HEK293 (cell line): ENCODE measurements at regions of chr17 and their contacts with region 1.

Region 1: DNA sequence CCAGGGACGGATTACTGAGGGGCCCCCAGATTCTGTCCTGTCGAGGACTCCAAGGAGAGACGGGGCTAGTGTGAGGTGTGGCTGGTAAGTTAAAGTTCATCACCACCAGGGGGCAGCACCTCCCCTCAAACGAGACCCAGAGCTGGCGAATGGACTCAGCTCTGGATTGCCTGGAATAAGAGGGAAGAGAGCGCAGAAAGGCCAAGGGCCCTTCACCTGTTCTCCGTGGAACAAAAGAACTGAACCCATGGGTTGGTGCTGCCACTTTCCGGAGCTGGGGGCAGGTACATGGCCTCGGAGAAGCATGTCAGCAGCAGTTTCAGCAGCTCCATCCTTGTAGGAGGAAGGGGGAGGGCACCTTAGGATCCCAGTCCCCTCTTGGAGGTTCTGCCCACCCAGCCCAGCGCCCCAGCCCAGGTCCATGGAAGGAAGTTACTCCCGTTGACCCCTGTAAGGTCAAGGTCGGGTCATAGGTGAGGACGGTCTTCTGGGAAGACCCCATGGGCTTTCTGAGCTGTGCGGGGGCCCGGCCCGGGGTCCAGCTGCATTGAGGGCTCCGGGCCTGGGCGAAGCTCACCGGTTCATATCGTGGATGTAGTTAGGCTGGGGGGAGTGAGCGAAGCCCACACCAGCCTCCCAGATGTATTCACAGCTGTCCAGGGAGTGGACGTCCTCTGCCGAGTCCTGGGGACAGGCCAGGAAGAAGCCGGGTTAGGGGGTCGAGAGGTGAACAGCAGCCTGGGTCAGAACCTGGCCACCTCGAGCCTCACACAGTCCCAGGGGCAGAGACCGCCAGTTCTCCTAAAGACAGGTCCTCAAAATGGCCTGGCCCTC is 10.7 kb downstream of the HID1 start:
- H3K4me3 ChIP-seq: no peak overlapping the region
- H3K27ac ChIP-seq: no peak overlapping the region
- H3K4me1 ChIP-seq: no peaks in the 10 kb centered on the region
- CTCF ChIP-seq: peak; percentile 63

Region 2: DNA sequence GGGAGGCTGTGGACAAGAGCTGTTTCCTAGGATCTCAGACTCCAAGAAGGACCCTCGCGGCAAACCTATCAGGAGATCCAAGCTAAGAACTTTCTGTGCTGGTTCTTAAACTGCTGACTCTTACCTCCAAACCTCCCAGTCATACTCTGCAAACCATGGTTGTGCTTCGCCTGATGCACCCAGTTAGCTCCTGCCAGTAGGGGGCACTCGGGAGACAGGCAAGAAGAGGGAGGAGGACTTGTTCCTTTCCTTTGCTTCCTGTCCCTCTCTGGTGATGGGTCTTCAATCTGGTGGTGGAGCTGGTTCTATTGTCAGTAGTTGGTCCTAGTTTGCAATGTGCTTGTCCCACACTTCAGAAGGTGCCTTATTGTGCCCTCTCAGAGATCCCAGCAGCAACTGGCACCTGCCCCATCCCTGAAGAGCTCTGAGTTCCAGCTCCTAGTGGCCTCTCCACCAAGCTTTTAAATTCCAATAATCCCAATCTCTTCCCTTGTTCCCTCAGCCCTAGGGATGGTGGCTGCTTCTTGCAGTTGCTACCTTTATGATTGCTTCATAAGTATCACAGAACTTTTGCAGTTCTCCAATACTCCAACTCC is 871.9 kb before region 1 on chr17:
- CTCF ChIA-PET with region 1: no interaction called
- POLR2A ChIA-PET with region 1: no interaction called
- H3K4me3 ChIP-seq: no peak overlapping the region
- H3K27ac ChIP-seq: no peak overlapping the region
- H3K4me1 ChIP-seq: no peaks in the 10 kb centered on the region
- CTCF ChIP-seq: peak; percentile 42; the same call in 1 of the 2 replicates

Region 3: GRCh38 chr17:74748529-74749365 is 213.1 kb before region 1 on chr17 and contains the start of gene NHERF1:
- CTCF ChIA-PET with region 1: interaction called, 23 read pairs
- POLR2A ChIA-PET with region 1: no interaction called
- H3K4me3 ChIP-seq: peak within 1 kb of the TSS; percentile 81
- H3K27ac ChIP-seq: peak within 1 kb of the TSS; percentile 68; the same call in 1 of the 2 replicates
- H3K4me1 ChIP-seq: peaks cover 7% of the 10 kb centered on the region
- CTCF ChIP-seq: peak; percentile 100

Region 4: DNA sequence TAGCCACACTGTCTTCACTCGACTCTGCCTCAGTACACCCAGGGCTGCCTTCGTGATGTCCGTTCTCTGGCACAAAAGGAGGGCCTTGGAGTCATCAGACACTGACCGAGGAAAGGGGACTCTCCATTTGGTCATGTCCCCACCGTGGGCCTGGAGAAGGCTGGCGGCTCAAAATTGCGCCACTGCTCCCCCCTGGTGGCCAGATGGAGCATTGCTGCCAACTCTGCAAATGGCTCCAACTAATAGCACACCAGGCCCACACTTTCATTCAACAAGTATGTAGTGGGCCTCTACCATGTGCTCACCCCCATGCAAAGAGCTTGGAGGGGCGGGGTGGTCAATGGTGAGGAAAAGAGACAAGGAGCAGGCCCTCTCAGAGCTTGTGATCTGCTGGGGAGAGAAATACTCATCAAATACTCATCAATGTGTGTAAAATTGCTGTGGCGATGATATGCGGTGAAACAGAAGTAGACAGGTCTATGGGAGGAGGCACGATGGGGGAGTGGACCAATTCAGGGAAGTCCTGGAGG is 96.9 kb before region 1 on chr17:
- CTCF ChIA-PET with region 1: interaction called, 16 read pairs
- POLR2A ChIA-PET with region 1: interaction called, 3 read pairs
- H3K4me3 ChIP-seq: no peak overlapping the region
- H3K27ac ChIP-seq: no peak overlapping the region
- H3K4me1 ChIP-seq: 0 out of 2 replicates have a peak, but pooled peaks cover 2% of the 10 kb centered on the region
- CTCF ChIP-seq: peak; percentile 85

Region 5: DNA sequence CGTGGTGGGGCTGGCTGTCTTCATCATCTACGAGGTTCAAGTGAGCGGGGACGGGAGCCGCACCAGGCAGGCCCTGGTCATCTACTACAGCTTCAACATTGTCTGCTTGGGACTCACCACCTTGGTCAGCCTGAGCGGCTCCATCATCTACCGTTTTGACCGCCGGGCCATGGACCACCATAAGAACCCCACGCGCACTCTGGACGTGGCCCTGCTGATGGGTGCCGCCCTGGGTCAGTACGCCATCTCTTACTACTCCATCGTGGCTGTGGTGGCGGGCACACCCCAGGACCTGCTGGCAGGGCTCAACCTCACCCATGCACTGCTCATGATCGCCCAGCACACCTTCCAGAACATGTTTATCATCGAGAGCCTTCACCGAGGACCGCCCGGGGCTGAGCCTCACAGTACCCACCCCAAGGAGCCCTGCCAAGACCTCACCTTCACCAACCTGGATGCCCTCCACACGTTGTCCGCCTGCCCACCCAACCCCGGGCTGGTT is 31.3 kb before region 1 on chr17:
- CTCF ChIA-PET with region 1: interaction called, 69 read pairs
- POLR2A ChIA-PET with region 1: no interaction called
- H3K4me3 ChIP-seq: no peak overlapping the region
- H3K27ac ChIP-seq: no peak overlapping the region
- H3K4me1 ChIP-seq: no peaks in the 10 kb centered on the region
- CTCF ChIP-seq: no peak

Region 6: DNA sequence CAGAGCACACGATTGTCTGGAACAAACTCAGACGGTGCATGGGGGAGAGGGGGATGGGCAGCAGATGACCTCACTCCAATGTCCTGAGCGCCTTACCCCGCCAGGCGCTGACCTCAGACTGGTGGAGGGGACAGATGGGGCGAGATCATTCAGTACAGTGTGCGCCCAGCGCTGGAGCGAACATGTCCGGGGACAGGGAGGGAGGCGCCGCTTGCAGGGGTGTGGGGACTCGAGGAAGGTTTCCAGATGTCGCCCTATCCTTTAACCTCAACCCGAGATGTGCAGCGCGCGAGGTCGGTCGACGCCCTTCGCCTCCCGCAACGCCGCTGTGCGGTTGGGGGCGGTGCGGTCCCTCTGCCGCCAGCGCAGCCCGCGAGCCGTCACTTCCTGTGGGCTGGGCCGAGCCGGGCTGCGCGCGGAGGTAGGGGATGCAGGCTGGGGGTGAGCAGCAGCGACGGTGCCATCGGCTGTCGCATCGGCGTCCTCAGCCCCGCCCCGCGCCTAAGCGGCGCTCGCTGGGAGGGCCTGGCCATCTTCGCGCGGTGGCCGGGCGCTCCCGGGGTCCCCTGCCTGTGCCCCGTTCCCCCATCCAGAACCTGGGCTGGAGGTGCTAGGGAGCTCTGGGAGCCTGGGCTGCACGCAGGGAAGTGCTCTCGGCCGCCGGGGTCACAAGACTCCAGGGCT is 20.2 kb after region 1 on chr17:
- CTCF ChIA-PET with region 1: interaction called, 18 read pairs
- POLR2A ChIA-PET with region 1: interaction called, 7 read pairs
- H3K4me3 ChIP-seq: peak overlapping the region; percentile 56
- H3K27ac ChIP-seq: peak overlapping the region; percentile 79
- H3K4me1 ChIP-seq: peaks cover 3% of the 10 kb centered on the region; the same call in 1 of the 2 replicates
- CTCF ChIP-seq: peak; percentile 80; the same call in 1 of the 2 replicates

Region 7: GRCh38 chr17:75006653-75007052 is 44.8 kb after region 1 on chr17:
- CTCF ChIA-PET with region 1: interaction called, 62 read pairs
- POLR2A ChIA-PET with region 1: interaction called, 34 read pairs
- H3K4me3 ChIP-seq: no peak overlapping the region
- H3K27ac ChIP-seq: no peak overlapping the region
- H3K4me1 ChIP-seq: peaks cover 15% of the 10 kb centered on the region
- CTCF ChIP-seq: no peak

Region 8: GRCh38 chr17:75034236-75034908 is 72.5 kb after region 1 on chr17:
- CTCF ChIA-PET with region 1: interaction called, 15 read pairs
- POLR2A ChIA-PET with region 1: interaction called, 13 read pairs
- H3K4me3 ChIP-seq: peak overlapping the region; percentile 60
- H3K27ac ChIP-seq: peak overlapping the region; percentile 94
- H3K4me1 ChIP-seq: peaks cover 19% of the 10 kb centered on the region
- CTCF ChIP-seq: peak; percentile 51

Region 9: DNA sequence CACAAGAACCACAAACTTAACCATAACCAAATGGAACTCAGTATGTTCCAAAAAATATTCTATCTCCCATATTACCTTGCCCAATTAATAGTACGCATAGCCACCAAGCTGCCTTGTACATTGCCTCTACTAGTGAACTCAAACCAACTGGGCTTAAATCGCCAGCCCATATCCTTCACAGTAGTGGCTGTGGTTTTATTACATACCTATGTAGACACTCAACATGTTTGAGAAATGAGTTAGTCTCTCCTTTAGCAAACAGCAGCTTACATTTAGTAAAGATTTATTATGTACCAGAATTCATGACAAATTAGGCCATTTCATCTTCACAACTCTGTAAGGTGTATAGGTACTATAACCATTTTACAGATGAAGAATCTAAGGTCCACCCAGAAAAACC is 402.2 kb after region 1 on chr17:
- CTCF ChIA-PET with region 1: no interaction called
- POLR2A ChIA-PET with region 1: no interaction called
- H3K4me3 ChIP-seq: no peak overlapping the region
- H3K27ac ChIP-seq: no peak overlapping the region
- H3K4me1 ChIP-seq: peaks cover 59% of the 10 kb centered on the region
- CTCF ChIP-seq: no peak